CD8-positive, alpha-beta memory T cell (primary cell): ENCODE measurements at regions of chr19 and their contacts with region 1.

Region 1: GRCh38 chr19:4197625-4198466 is 15.4 kb downstream of the ANKRD24 start:
- DNase-seq: no peak
- H3K4me3 ChIP-seq: no peak overlapping the region
- H3K4me3 Mint-ChIP-seq: peak overlapping the region in 1 of 7 donors; percentile 49
- H3K27ac ChIP-seq: no peak overlapping the region
- H3K27ac Mint-ChIP-seq: peak overlapping the region in 2 of 8 donors; percentile 17 to 20
- H3K4me1 ChIP-seq: no peaks in the 10 kb centered on the region
- H3K4me1 Mint-ChIP-seq: peaks cover 9 to 13% (median 10%) of the 10 kb centered on the region in 3 donors
- H3K27me3 ChIP-seq: peaks cover 22% of the 10 kb centered on the region
- H3K27me3 Mint-ChIP-seq: peaks cover 44 to 52% of the 10 kb centered on the region in 2 donors

Region 2: GRCh38 chr19:4115050-4115817 is 82.6 kb before region 1 on chr19:
- CTCF ChIA-PET with region 1: no interaction called
- POLR2A ChIA-PET with region 1: no interaction called
- DNase-seq: peak; percentile 57 to 85 (median 77)
- H3K4me3 ChIP-seq: peak overlapping the region; percentile 22
- H3K4me3 Mint-ChIP-seq: peak overlapping the region; percentile 51 to 78 (median 67)
- H3K27ac ChIP-seq: peak overlapping the region; percentile 26
- H3K27ac Mint-ChIP-seq: peak overlapping the region; percentile 84 to 94 (median 89)
- H3K4me1 ChIP-seq: peaks cover 29% of the 10 kb centered on the region
- H3K4me1 Mint-ChIP-seq: peaks cover 34 to 62% (median 35%) of the 10 kb centered on the region in 3 donors
- H3K27me3 ChIP-seq: no peaks in the 10 kb centered on the region
- H3K27me3 Mint-ChIP-seq: no peaks in the 10 kb centered on the region

Region 3: DNA sequence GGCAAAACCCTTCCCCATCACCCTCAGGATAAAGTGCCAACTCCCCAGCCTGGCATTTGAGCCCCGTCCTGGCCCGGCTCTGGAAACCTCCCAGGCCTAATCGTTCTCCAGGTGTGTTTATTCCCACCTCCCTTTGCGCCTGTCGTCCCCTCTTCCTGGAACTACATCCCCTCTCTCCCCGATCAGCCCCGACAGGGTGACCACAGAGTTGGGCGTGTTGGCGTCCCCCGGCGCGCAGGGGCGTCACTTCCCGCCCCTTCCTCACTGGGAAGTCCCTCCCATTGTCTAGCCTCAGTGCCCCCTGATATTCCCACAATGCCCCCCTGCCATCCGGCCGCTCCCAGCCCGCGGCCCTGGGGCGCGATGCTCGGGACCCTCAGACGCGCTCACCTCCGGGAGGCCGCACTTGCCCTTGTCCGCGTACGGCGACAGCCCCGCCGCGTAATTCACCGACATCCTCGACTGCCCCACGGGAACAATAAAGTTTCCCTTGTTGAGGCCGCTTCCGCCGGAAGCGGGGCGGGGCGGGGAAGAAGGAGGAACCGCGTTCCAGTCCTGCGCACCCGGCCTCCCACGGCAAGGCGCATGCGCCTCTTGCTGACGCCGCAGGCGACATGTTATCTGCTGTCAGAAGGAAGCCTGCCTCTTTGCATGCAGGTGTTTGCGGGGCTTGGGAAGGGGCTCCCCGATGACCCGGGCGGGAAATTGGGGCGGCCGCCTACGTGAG is 15.6 kb before region 1 on chr19 and contains the starts of genes ANKRD24 and SIRT6:
- CTCF ChIA-PET with region 1: interaction called, 4 read pairs
- POLR2A ChIA-PET with region 1: interaction called, 12 read pairs
- DNase-seq: peak; percentile 94 to 98 (median 94)
- H3K4me3 ChIP-seq: peak within 1 kb of the TSS; percentile 99
- H3K4me3 Mint-ChIP-seq: peak within 1 kb of the TSS; percentile 94 to 99 (median 97)
- H3K27ac ChIP-seq: peak within 1 kb of the TSS; percentile 84
- H3K27ac Mint-ChIP-seq: peak within 1 kb of the TSS; percentile 93 to 98 (median 96)
- H3K4me1 ChIP-seq: peaks cover 22% of the 10 kb centered on the region
- H3K4me1 Mint-ChIP-seq: peaks cover 28 to 44% (median 35%) of the 10 kb centered on the region in 3 donors
- H3K27me3 ChIP-seq: no peaks in the 10 kb centered on the region
- H3K27me3 Mint-ChIP-seq: peaks cover 0 to 8% of the 10 kb centered on the region in 2 donors
- total RNA-seq, gene ANKRD24: 0.89 to 0.90 TPM
- total RNA-seq, gene SIRT6: 33.5 to 38.6 TPM